Caki2 (cell line): ENCODE measurements at regions of chr1 and their contacts with region 1.

Region 1: GRCh38 chr1:224377676-224378006 is 21.0 kb downstream of the CNIH4 start:
- DNase-seq: peak; percentile 60

Region 2: GRCh38 chr1:224427346-224427745 is 49.7 kb after region 1 on chr1:
- in situ Hi-C with region 1: loop called (anchors 10 kb)
- DNase-seq: peak; percentile 31